ENCODE measurements at regions of chr3 and their contacts with region 1.

Region 1: GRCh38 chr3:161409069-161409468 is 37.8 kb upstream of the SPTSSB start:
- DNase-seq: peak; percentile 94
- ATAC-seq: no peak
- H3K4me3 ChIP-seq: no peak overlapping the region
- H3K27ac ChIP-seq: peak overlapping the region; percentile 98
- H3K4me1 ChIP-seq: peaks cover 82% of the 10 kb centered on the region
- H3K27me3 ChIP-seq: no peaks in the 10 kb centered on the region
- CTCF ChIP-seq: peak; percentile 92

Region 2: GRCh38 chr3:161096771-161097355 is 312.2 kb before region 1 on chr3:
- CTCF ChIA-PET with region 1: no interaction called
- POLR2A ChIA-PET with region 1: no interaction called
- intact Hi-C with region 1: loop called (anchors 5 kb)
- DNase-seq: peak; percentile 72
- ATAC-seq: peak; percentile 77
- H3K4me3 ChIP-seq: no peak overlapping the region
- H3K27ac ChIP-seq: no peak overlapping the region
- H3K4me1 ChIP-seq: 0 out of 2 replicates have a peak, but pooled peaks cover 11% of the 10 kb centered on the region
- H3K27me3 ChIP-seq: no peaks in the 10 kb centered on the region
- CTCF ChIP-seq: peak; percentile 93

Region 3: DNA sequence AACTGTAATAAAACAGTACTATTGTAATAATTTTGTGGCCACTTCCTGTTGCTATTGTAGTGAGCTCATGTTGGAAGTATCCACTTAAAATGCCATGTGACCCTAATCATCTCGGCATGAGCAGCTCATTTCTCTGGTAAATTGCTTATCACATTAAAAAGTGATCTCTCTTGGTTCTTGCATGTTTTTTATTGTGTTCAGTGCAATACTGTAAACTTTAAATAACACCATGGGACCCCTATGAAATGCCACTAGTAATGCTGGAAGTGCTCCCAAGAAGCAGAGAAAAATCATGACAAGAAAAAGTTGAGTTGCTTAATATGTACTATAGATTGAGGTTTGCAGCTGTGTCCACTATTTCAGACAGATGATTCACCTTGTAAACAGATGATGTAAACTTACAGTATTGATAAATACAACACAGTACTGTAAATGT is 142.3 kb before region 1 on chr3:
- CTCF ChIA-PET with region 1: no interaction called
- POLR2A ChIA-PET with region 1: no interaction called
- intact Hi-C with region 1: loop called (anchors 1 kb)
- DNase-seq: peak; percentile 84
- ATAC-seq: peak; percentile 77
- H3K4me3 ChIP-seq: peak overlapping the region; percentile 50; the same call in 1 of the 2 replicates
- H3K27ac ChIP-seq: peak overlapping the region; percentile 98
- H3K4me1 ChIP-seq: peaks cover 52% of the 10 kb centered on the region
- H3K27me3 ChIP-seq: no peaks in the 10 kb centered on the region
- CTCF ChIP-seq: no peak

Region 4: DNA sequence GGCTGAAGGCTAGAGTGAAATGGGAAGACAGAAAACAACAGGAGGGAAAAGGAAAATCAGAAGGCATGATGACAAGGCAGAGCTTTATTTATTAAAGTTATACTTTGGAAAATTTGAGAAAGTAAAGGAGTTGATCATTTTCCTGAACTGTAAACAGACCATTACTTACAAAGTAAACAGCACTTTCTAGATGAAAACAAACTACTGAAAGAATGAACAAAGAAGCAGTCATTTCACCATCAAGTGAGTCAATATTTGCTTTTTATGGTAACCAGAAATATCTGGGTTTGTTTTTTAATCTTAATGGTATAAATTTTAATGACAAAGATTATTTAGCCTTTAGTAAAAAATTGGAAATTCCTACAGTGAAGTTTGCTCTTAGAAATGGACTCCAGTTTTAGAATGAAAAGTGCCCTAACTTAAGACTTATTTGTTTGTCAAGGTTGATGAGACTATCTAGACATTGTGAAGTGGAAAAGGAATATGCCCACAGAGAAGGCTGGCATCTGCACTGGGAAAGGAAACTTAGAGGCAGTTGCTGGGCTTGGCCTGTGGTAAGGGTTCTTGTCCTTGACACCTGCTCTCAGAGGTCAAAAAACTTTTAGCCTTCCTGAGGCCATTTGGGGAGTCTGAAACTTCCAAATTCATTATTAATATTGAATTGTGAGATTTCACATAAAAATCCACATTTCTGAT is 85.0 kb before region 1 on chr3:
- CTCF ChIA-PET with region 1: no interaction called
- POLR2A ChIA-PET with region 1: no interaction called
- intact Hi-C with region 1: loop called (anchors 1 kb)
- DNase-seq: peak; percentile 78
- ATAC-seq: peak; percentile 81
- H3K4me3 ChIP-seq: peak overlapping the region; percentile 1; the same call in 1 of the 2 replicates
- H3K27ac ChIP-seq: peak overlapping the region; percentile 91
- H3K4me1 ChIP-seq: peaks cover 32% of the 10 kb centered on the region
- H3K27me3 ChIP-seq: no peaks in the 10 kb centered on the region
- CTCF ChIP-seq: no peak

Region 5: GRCh38 chr3:161371430-161372326 is 37.4 kb before region 1 on chr3 and contains the start of gene SPTSSB:
- CTCF ChIA-PET with region 1: interaction called, 5 read pairs
- POLR2A ChIA-PET with region 1: interaction called, 9 read pairs
- intact Hi-C with region 1: loop called (anchors 1 kb)
- DNase-seq: peak; percentile 96
- ATAC-seq: peak; percentile 76
- H3K4me3 ChIP-seq: peak within 1 kb of the TSS; percentile 76
- H3K27ac ChIP-seq: peak within 1 kb of the TSS; percentile 98
- H3K4me1 ChIP-seq: peaks cover 25% of the 10 kb centered on the region
- H3K27me3 ChIP-seq: no peaks in the 10 kb centered on the region
- CTCF ChIP-seq: peak; percentile 64
- total RNA-seq, gene SPTSSB: 78.0 and 144 TPM in 2 replicates

Region 6: GRCh38 chr3:161644891-161645661 is 236.0 kb after region 1 on chr3:
- CTCF ChIA-PET with region 1: no interaction called
- POLR2A ChIA-PET with region 1: no interaction called
- intact Hi-C with region 1: no loop called
- DNase-seq: peak; percentile 45
- ATAC-seq: peak; percentile 62
- H3K4me3 ChIP-seq: no peak overlapping the region
- H3K27ac ChIP-seq: no peak overlapping the region
- H3K4me1 ChIP-seq: peaks cover 10% of the 10 kb centered on the region
- H3K27me3 ChIP-seq: peaks cover 26% of the 10 kb centered on the region
- CTCF ChIP-seq: no peak

Measured in PC-3 (cell line).